ENCODE measurements at regions of chr12 and their contacts with region 1.

Region 1: GRCh38 chr12:26113853-26114719 is 10.8 kb downstream of the BHLHE41 start:
- DNase-seq: peak; percentile 97
- ATAC-seq: peak; percentile 94

Region 2: DNA sequence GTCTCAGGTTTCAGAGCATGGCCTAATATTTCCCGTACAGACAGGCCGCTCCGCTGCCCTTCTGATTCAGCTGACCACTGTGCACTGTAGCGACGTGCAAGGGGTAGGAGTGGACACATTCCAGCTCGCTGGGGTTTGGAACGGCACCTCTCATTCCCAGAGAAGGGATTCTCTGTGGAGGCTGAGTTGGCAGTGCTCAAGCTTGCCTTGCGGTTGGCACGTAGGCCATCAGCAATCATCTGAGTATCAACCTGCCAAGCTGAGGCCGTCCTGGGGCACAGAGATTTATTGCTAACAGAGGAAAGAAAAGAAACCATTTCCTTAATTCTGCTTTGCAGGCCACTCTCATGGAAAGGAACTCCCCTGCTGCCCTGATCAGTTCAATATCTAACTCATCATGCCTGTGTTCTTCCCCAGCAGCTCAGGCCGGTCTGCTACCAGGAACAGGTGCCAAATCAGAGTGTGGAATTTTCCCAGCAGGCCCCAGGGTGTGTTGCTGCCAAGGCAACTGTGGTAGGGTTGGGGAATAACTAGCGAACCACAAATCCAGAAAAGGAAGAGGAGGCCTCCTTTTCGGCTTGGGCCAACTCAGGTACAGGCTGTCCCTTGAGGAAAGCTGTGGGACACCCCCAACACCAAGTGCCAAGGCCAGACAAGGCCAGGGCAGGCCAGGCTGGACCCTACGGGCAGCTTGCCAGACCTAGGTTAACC is 173.7 kb after region 1 on chr12:
- intact Hi-C with region 1: loop called (anchors 10 kb)
- DNase-seq: peak; percentile 39
- ATAC-seq: peak; percentile 88

Region 3: DNA sequence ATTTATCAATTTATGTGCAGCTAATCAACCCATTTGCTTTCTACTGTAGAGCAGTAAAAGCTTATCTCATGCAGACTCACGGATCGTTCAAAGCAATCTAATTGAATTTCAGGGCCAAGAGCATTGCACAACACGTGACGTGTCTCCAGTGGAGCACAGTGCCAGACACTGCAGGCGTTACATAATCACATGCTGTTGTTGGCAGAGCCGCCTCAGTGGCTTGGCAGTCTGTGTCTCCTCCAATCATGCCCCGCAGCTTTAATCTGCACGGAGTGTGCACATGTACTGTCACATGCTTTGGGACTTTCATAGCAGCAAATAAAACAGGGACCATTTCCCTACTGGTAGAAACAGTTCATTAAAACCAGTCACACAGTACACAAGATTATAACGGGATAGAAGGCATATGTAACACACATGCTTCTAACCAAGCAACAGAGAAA is 409.6 kb after region 1 on chr12:
- intact Hi-C with region 1: loop called (anchors 10 kb)
- DNase-seq: peak; percentile 87
- ATAC-seq: peak; percentile 100

Measured in left ventricle myocardium superior (tissue), 1 donor.